ENCODE measurements at regions of chr5 and their contacts with region 1.

Region 1: GRCh38 chr5:36507332-36507952 is 99.0 kb upstream of the SLC1A3 start:
- DNase-seq: peak; percentile 65 to 82 (median 73)
- H3K4me3 ChIP-seq: no peak overlapping the region
- H3K27ac ChIP-seq: no peak overlapping the region
- H3K4me1 ChIP-seq: no peaks in the 10 kb centered on the region
- H3K27me3 ChIP-seq: no peaks in the 10 kb centered on the region
- CTCF ChIP-seq: peak; percentile 71

Region 2: GRCh38 chr5:36305571-36306326 is 201.7 kb before region 1 on chr5:
- intact Hi-C with region 1: no loop called
- DNase-seq: peak in 4 of 5 donors; percentile 33 to 72 (median 42)
- H3K4me3 ChIP-seq: no peak overlapping the region
- H3K27ac ChIP-seq: no peak overlapping the region
- H3K4me1 ChIP-seq: peaks cover 0 to 9% (median 6%) of the 10 kb centered on the region in 3 donors
- H3K27me3 ChIP-seq: no peaks in the 10 kb centered on the region
- CTCF ChIP-seq: peak; percentile 76

Region 3: GRCh38 chr5:36414869-36415282 is 92.6 kb before region 1 on chr5:
- intact Hi-C with region 1: loop called (anchors 5 kb)
- DNase-seq: peak in 2 of 5 donors; percentile 69 to 80
- H3K4me3 ChIP-seq: no peak overlapping the region
- H3K27ac ChIP-seq: no peak overlapping the region
- H3K4me1 ChIP-seq: no peaks in the 10 kb centered on the region
- H3K27me3 ChIP-seq: no peaks in the 10 kb centered on the region
- CTCF ChIP-seq: peak; percentile 49